ENCODE measurements at regions of chr6 and their contacts with region 1.

Region 1: GRCh38 chr6:135088818-135089809 is 34.5 kb upstream of the HBS1L start:
- DNase-seq: peak; percentile 85
- H3K4me3 Mint-ChIP-seq: peak overlapping the region; percentile 59
- H3K27ac Mint-ChIP-seq: peak overlapping the region; percentile 90
- H3K4me1 Mint-ChIP-seq: peaks cover 75% of the 10 kb centered on the region
- H3K27me3 Mint-ChIP-seq: no peaks in the 10 kb centered on the region

Region 2: GRCh38 chr6:134954272-134955000 is 134.7 kb before region 1 on chr6:
- intact Hi-C with region 1: loop called (anchors 2 kb)
- DNase-seq: no peak
- H3K4me3 Mint-ChIP-seq: no peak overlapping the region
- H3K27ac Mint-ChIP-seq: no peak overlapping the region
- H3K4me1 Mint-ChIP-seq: peaks cover 13% of the 10 kb centered on the region
- H3K27me3 Mint-ChIP-seq: no peaks in the 10 kb centered on the region

Region 3: DNA sequence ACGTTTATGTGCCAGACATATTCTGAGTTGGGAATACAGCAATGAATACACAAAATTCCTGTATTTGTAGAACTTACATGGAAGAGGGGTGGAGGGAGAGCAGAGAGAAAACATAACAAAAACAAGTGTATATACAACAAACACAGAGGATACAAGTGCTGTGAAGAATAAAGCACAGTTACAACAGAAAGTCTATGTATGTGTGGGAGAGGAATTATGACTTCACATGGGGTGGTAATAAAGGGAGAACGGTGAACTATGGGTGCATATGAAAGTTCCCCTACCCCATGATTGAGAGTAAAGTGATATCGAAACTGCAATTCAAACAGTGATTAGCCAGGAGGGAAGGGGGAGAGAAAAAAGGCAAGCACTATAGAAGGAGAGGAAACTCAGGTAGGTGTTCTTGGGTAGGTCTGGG is 59.0 kb before region 1 on chr6:
- intact Hi-C with region 1: loop called (anchors 1 kb)
- DNase-seq: peak; percentile 76
- H3K4me3 Mint-ChIP-seq: peak overlapping the region; percentile 52
- H3K27ac Mint-ChIP-seq: peak overlapping the region; percentile 80
- H3K4me1 Mint-ChIP-seq: peaks cover 46% of the 10 kb centered on the region
- H3K27me3 Mint-ChIP-seq: no peaks in the 10 kb centered on the region

Region 4: GRCh38 chr6:135054569-135055498 is 34.3 kb before region 1 on chr6 and contains the start of gene HBS1L:
- intact Hi-C with region 1: loop called (anchors 1 kb)
- DNase-seq: peak; percentile 99
- H3K4me3 Mint-ChIP-seq: peak within 1 kb of the TSS; percentile 92
- H3K27ac Mint-ChIP-seq: peak within 1 kb of the TSS; percentile 94
- H3K4me1 Mint-ChIP-seq: peaks cover 32% of the 10 kb centered on the region
- H3K27me3 Mint-ChIP-seq: no peaks in the 10 kb centered on the region
- total RNA-seq, gene HBS1L: 94.4 and 104 TPM in 2 replicates

Region 5: GRCh38 chr6:135066397-135066796 is 22.7 kb before region 1 on chr6:
- intact Hi-C with region 1: no loop called
- DNase-seq: no peak
- H3K4me3 Mint-ChIP-seq: no peak overlapping the region
- H3K27ac Mint-ChIP-seq: peak overlapping the region; percentile 40
- H3K4me1 Mint-ChIP-seq: peaks cover 12% of the 10 kb centered on the region
- H3K27me3 Mint-ChIP-seq: no peaks in the 10 kb centered on the region

Region 6: GRCh38 chr6:135128268-135128914 is 39.3 kb after region 1 on chr6:
- intact Hi-C with region 1: loop called (anchors 1 kb)
- DNase-seq: peak; percentile 86
- H3K4me3 Mint-ChIP-seq: peak overlapping the region; percentile 73
- H3K27ac Mint-ChIP-seq: peak overlapping the region; percentile 91
- H3K4me1 Mint-ChIP-seq: peaks cover 42% of the 10 kb centered on the region
- H3K27me3 Mint-ChIP-seq: no peaks in the 10 kb centered on the region

Region 7: DNA sequence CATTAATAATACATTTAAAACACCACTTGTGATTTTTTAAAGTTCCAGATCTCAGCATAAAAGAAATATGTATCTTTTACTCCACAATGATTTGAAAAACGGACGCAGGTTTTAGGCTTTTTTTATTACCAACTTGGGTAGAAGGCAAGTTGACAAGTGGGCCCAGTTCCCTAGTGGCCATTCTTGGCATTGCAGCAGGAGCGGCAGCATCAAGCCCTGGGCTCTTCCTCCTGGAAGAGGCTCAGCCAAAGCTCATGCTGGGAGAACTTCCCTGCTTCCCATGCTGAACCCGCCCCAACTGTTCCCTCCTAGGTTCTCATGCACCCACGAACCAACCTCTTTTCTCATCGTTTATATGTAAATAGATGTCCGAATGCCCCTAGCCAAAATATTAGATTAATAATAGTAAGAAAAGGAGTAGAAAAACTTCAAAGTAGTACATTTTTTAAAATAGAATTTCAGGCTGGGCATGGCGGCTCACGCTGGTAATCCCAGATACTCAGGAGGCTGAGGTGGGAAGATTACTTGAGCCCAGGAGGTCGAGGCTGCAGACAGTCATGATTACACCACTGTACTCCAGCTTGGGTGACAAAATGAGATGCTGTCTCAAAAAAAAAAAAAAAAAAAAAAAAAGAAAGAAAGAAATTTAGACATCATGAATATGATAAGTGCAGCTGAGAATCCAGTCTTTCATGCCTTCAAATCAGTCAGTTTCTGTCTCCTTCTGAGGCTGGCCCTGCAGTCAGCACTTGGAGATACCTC is 73.7 kb after region 1 on chr6:
- intact Hi-C with region 1: loop called (anchors 1 kb)
- DNase-seq: peak; percentile 75
- H3K4me3 Mint-ChIP-seq: peak overlapping the region; percentile 61
- H3K27ac Mint-ChIP-seq: peak overlapping the region; percentile 93
- H3K4me1 Mint-ChIP-seq: peaks cover 47% of the 10 kb centered on the region
- H3K27me3 Mint-ChIP-seq: no peaks in the 10 kb centered on the region